ENCODE measurements at regions of chr14 and their contacts with region 1.

Region 1: DNA sequence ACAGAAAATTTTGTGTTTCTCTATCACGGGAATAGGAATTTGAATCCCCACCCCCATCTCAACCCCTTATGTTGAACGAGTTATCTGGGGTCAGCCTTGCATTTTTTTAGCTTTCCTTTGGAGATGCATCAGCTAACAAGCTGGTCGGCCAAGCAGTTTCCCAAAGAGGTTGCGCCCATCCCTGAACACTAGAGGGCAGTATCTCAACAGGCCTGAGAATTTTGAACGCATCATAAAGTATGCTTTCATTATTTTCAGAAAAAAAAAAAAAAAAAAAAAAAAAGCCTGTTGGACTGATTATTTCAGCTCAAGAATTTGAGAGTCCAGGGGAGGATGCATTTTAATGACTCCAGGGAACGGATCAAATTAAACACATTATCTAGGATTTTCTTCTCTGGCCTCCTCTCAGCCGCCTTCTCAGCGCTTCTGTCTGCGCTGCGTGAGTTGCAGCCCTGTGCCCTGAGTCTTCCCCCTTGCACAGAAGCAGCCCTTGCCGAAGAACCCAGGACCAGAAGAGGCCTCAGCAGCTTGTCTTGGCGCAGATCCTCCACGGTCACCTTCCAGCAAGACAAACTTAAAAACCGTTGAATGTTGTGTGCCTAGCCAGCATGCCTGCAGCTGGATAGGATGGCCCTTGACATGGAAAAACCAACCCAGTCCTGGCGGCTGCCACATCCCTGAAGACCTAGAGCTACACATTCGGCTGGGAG is 76.6 kb upstream of the GZMB start:
- DNase-seq: peak in 9 of 10 donors; percentile 30 to 78 (median 64)
- H3K4me3 ChIP-seq: peak overlapping the region in 51 of 59 donors; percentile 7 to 64 (median 36)
- H3K27ac ChIP-seq: peak overlapping the region in 1 of 59 donors; percentile 33
- H3K27me3 ChIP-seq: no peaks in the 10 kb centered on the region
- CTCF ChIP-seq: peak; percentile 51 to 93 (median 84)

Region 2: DNA sequence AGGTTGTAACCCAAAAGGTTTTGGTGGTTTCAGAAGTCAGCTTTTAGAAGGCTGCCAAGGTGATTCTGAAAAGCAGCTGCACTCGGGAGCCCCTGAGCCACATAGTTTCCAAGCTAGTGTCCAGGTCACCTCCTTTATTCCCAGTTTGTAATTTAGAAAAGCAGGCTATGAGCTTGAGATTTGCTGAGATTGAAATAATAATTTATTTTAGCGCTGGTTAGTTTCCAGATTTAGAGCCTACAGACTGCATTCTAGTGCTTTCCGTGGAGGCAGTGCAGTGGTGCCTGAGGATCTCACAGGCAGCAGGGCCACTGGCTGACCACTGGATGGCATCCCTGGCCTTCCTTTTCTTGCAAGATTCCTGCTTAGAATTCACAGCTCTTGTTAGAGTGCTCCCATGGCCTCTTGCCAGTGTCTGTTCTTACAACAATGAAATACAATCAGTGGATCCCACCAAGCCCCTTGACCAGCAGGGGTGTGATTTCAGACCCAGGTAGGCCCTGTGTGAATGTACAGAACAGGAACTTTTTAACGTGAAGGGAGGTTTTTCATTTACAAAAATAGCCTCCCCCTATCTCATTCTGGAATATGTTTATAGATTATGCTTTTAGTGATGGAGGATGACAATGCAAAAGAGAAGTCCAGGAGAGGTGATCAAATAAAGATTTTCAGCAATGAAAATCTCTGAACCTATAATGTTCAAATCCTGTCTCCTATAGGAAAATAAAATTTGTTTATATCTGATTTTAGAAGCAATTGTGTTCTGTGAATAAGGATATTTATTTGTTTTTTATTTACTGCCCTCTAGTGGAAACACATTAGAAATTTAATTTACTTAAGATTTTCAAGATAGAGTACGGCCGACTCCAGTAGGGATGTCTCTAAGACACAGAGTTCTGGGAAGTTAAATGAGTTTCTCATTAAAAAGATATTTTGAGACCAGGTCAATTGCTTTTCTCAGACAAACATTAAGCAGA is 701.5 kb after region 1 on chr14:
- intact Hi-C with region 1: loop called in 1 of 2 experiments (anchors 5 kb)
- DNase-seq: peak in 9 of 10 donors; percentile 3 to 77 (median 65)
- H3K4me3 ChIP-seq: no peak overlapping the region
- H3K27ac ChIP-seq: peak overlapping the region in 11 of 59 donors; percentile 1 to 66 (median 29)
- H3K27me3 ChIP-seq: no peaks in the 10 kb centered on the region
- CTCF ChIP-seq: peak in 55 of 56 donors; percentile 8 to 69 (median 53)